ENCODE measurements at regions of chr4 and their contacts with region 1.

Region 1: DNA sequence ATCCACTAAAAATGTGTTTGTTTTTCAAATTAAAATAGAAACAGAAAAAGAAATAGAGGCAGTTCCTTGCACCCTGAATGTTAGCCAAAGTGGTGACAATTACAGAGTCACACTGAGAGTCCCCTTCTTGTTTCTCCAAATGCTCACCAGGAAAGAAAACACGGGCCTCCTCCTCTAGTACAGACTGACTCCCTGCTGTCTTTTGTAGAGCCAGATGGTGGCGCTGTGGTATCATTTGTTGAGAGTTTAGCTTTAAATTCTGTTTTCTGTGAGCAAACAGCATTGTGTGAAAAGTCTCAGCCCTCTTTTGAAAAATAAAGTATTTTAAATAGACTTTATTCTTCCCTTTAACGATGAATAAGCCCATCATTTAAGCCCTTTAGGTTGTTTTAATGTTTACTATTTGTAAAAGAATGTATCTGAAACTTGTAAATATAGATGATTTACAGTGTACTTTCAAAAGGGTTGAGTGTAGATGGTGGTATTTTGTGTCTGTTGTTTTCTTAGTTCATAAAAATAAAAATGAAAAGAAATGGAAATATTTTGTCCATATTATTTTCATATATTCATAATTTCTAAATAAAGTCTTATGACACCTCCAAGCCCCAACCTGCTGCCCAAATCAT is 36.9 kb upstream of the ATOH1 start:
- DNase-seq: peak; percentile 59
- H3K4me3 ChIP-seq: no peak overlapping the region; a peak in 1 of 4 replicates
- H3K27ac ChIP-seq: no peak overlapping the region
- H3K4me1 ChIP-seq: no peaks in the 10 kb centered on the region
- H3K27me3 ChIP-seq: peaks cover 7% of the 10 kb centered on the region
- CTCF ChIP-seq: peak; percentile 93
- EP300 ChIP-seq: no peak
- RAD21 ChIP-seq: peak; percentile 95

Region 2: DNA sequence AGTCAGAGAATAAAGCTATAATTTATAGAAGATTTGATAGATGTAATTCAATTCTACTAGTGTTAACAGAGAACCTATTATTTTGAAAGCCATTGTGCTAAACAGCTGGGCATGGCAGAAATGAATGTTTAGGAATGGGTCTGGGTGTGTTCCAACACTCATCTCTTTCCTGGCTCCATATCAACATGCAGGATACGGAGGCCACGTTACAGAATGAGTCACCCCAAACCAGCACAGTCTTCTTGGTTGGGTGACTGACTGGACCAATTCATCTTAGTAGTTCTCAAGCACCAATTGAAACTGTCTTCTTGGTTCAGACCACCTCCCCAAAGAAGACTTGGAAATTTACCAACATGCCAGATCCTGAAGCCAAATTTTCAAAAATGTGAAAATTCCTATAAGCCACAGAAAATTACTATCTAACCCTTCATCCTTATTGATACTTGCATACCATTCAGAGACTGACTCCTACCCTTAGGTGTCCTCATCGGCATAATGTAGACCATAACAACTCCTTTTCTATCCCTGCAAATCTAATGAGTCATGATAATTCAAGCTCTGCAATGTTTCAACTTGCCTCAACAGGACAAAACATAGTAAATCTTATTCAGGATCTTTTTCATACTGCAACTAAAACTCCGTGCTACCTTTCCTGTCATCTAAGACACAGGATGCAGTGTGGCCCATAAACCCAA is 15.2 kb before region 1 on chr4:
- CTCF ChIA-PET with region 1: interaction called, 25 read pairs
- POLR2A ChIA-PET with region 1: no interaction called
- DNase-seq: no peak
- H3K4me3 ChIP-seq: no peak overlapping the region
- H3K27ac ChIP-seq: no peak overlapping the region
- H3K4me1 ChIP-seq: peaks cover 0 to 4% of the 10 kb centered on the region in 2 experiments; a peak in 2 of 4 replicates
- H3K27me3 ChIP-seq: no peaks in the 10 kb centered on the region
- CTCF ChIP-seq: no peak
- EP300 ChIP-seq: no peak
- RAD21 ChIP-seq: no peak

Region 3: GRCh38 chr4:93802085-93802484 is 10.4 kb after region 1 on chr4:
- CTCF ChIA-PET with region 1: interaction called, 16 read pairs
- POLR2A ChIA-PET with region 1: no interaction called
- DNase-seq: no peak
- H3K4me3 ChIP-seq: no peak overlapping the region
- H3K27ac ChIP-seq: no peak overlapping the region
- H3K4me1 ChIP-seq: no peaks in the 10 kb centered on the region
- H3K27me3 ChIP-seq: no peaks in the 10 kb centered on the region
- CTCF ChIP-seq: no peak
- EP300 ChIP-seq: no peak
- RAD21 ChIP-seq: no peak

Region 4: DNA sequence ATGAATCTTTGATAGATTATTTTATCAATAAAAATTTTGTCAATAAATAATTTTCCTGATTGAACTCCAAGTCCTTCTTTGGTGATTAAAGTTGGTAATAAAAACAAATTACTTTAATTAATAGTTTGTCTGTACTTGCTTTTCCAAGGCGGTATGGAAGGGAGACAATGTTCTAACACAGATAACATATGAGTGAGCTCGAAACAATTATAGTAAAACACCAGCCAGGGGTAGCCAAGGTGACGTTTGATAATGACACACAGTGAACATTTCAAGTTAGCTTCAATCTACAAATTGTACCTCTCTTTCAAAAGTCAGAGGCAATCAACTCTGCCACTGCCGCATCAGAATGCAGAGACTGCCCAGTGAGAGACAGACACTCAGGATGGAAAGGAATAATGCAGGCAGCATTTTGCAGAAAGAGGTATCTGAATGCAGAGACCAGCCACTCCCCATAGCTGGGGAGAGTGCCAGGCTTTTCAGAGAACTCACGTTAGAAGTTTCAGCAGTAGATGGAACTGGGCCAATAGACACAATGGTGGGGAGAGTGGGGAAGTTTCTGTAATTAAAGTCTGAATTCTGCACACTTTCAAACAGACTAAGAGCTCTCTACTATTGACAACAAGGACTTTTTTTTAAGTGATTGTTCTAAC is 18.8 kb after region 1 on chr4:
- CTCF ChIA-PET with region 1: interaction called, 12 read pairs
- POLR2A ChIA-PET with region 1: no interaction called
- DNase-seq: no peak
- H3K4me3 ChIP-seq: no peak overlapping the region
- H3K27ac ChIP-seq: no peak overlapping the region
- H3K4me1 ChIP-seq: no peaks in the 10 kb centered on the region
- H3K27me3 ChIP-seq: no peaks in the 10 kb centered on the region
- CTCF ChIP-seq: no peak
- EP300 ChIP-seq: no peak
- RAD21 ChIP-seq: no peak

Measured in SK-N-SH (cell line).